Mammary epithelial cell (primary cell): ENCODE measurements at regions of chr15 and their contacts with region 1.

Region 1: GRCh38 chr15:76330080-76330680 is 6.4 kb upstream of the ISL2 start:
- DNase-seq: peak; percentile 36
- H3K4me3 ChIP-seq: no peak overlapping the region
- H3K27ac ChIP-seq: no peak overlapping the region
- H3K4me1 ChIP-seq: peaks cover 2% of the 10 kb centered on the region
- H3K27me3 ChIP-seq: peaks cover 3% of the 10 kb centered on the region
- CTCF ChIP-seq: peak; percentile 46 to 63

Region 2: GRCh38 chr15:76235186-76235826 is 94.9 kb before region 1 on chr15:
- CTCF ChIA-PET with region 1: interaction called, 3 read pairs
- dilution Hi-C with region 1: no loop called
- in situ Hi-C with region 1: no loop called
- intact Hi-C with region 1: loop called (anchors 1 kb)
- DNase-seq: peak; percentile 19
- H3K4me3 ChIP-seq: no peak overlapping the region
- H3K27ac ChIP-seq: no peak overlapping the region
- H3K4me1 ChIP-seq: no peaks in the 10 kb centered on the region
- H3K27me3 ChIP-seq: no peaks in the 10 kb centered on the region
- CTCF ChIP-seq: peak; percentile 29 to 43

Region 3: DNA sequence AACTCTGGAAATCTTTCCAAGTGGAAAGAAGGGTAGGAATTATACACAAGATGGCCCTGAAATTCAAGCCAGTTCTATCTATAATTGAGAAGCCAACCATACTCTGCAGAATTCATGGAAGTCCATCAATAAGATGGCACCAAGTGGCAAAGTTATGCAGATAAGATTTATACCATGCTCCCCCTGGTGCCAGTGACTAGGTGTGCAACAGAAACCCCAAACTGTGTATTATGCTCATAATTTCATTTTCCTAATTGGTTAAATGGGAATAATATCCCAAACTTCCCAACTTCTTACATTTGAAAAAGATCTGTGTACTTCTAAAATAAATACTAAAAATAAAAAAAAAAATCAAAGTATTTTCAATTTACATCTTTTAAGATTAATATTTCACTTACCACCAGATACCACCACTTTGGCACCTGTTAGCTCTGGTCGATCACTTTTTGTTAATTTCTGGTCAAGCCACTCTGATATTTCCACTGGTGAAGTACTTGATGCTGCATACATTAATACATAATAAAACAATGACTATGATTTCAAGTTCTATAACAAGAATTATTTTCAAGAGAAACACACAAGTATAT is 44.8 kb before region 1 on chr15:
- CTCF ChIA-PET with region 1: no interaction called
- dilution Hi-C with region 1: loop called (anchors 5 kb)
- in situ Hi-C with region 1: no loop called
- intact Hi-C with region 1: no loop called
- DNase-seq: peak; percentile 5
- H3K4me3 ChIP-seq: no peak overlapping the region
- H3K27ac ChIP-seq: no peak overlapping the region
- H3K4me1 ChIP-seq: no peaks in the 10 kb centered on the region
- H3K27me3 ChIP-seq: no peaks in the 10 kb centered on the region
- CTCF ChIP-seq: peak; percentile 65 to 69

Region 4: DNA sequence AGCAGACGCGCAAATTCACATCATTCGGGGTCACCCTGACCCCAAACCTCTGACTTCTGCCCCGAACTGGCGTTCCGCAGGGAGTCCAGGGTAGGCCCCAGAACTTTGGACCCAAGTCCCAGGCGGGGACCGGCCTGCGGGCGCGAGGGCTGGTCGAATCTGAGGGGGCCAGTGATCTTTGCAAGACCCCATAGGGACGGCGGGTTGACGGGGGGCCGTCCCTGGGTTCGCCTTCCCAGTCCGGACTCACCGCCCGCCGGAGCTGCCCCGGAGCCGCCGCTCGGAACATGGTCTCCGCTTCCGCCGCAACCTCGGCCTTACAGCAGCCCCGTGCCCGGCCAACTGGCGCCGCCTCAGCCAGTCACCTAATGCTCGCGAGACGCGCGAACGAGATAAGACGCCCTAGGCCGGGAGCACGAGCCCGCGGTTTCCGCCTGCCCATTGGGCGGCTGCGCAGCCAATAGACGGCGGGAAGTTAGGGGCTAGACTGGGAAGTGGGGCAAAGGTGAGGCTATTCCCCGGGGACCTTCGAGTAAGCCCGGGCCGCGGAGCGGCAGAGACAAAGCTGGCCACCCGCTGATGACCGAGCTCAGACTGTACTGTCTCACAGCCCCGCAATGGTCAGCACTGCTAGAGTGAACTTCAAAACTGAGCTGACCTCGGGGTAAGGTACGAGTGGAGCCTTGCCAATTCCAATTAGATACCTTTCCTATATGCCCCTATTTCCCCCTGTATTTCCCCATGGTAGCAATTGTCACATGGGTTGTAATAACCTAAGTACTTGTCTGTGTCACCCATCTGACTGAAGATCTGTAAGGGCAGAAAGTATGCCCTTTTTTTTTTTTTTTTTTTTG is 18.9 kb before region 1 on chr15 and contains the start of gene ETFA:
- CTCF ChIA-PET with region 1: no interaction called
- dilution Hi-C with region 1: no loop called
- in situ Hi-C with region 1: no loop called
- intact Hi-C with region 1: loop called (anchors 2 kb)
- DNase-seq: peak; percentile 92
- H3K4me3 ChIP-seq: peak within 1 kb of the TSS; percentile 90 to 91 (median 91)
- H3K27ac ChIP-seq: peak within 1 kb of the TSS; percentile 88
- H3K4me1 ChIP-seq: peaks cover 6% of the 10 kb centered on the region
- H3K27me3 ChIP-seq: no peaks in the 10 kb centered on the region
- CTCF ChIP-seq: no peak
- total RNA-seq, gene ETFA: 83.0 to 115 TPM

Region 5: DNA sequence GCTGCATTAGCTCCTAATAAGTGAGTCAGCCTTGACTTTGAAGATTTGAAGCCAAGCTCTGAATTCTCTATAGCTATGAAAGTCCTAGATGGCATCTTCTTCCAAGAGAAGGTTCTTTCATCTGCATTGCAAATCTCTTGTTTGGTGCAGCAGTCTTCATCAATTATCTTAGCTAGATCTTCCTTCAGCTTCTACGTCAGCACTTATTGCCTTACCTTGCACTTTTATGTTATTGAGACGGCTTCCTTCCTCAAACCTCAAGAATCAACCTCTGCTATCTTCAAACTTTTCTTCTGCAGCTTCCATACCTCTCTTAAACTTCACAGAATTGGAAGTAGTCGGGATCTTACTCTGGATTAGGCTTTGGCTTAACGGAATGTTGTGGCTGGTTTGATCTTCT is 407.4 kb after region 1 on chr15:
- CTCF ChIA-PET with region 1: no interaction called
- dilution Hi-C with region 1: no loop called
- in situ Hi-C with region 1: no loop called
- intact Hi-C with region 1: no loop called
- DNase-seq: no peak
- H3K4me3 ChIP-seq: no peak overlapping the region
- H3K27ac ChIP-seq: no peak overlapping the region
- H3K4me1 ChIP-seq: no peaks in the 10 kb centered on the region
- H3K27me3 ChIP-seq: no peaks in the 10 kb centered on the region
- CTCF ChIP-seq: no peak